PC-9 (cell line): ENCODE measurements at regions of chr5 and their contacts with region 1.

Region 1: DNA sequence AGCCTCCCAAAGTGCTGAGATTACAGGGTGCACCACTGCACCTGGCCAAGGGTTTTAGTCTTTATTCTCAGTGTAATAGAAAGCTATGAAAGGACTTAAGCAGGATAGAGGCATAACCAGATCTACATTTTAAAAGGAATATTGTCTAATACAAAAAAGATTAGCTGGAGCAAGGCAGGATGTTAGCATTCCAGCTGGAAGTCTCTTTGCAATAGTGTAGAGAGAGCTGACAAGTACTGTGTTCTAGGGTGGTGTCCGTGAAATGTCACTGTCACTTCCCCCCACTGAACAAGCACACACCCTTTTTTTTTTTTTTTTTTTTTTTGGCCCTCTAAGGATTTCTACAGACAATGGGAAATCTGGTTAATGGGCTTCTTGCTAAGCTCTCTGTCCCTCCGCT is 24.2 kb upstream of the DEPDC1B start:
- DNase-seq: no peak
- H3K4me3 ChIP-seq: no peak overlapping the region
- H3K27ac ChIP-seq: no peak overlapping the region
- H3K4me1 ChIP-seq: no peaks in the 10 kb centered on the region
- H3K27me3 ChIP-seq: no peaks in the 10 kb centered on the region
- CTCF ChIP-seq: no peak

Region 2: GRCh38 chr5:60131504-60131903 is 592.6 kb before region 1 on chr5:
- CTCF ChIA-PET with region 1: no interaction called
- POLR2A ChIA-PET with region 1: no interaction called
- intact Hi-C with region 1: no loop called
- DNase-seq: no peak
- H3K4me3 ChIP-seq: no peak overlapping the region
- H3K27ac ChIP-seq: no peak overlapping the region
- H3K4me1 ChIP-seq: no peaks in the 10 kb centered on the region
- H3K27me3 ChIP-seq: no peaks in the 10 kb centered on the region
- CTCF ChIP-seq: no peak

Region 3: GRCh38 chr5:60993425-60993824 is 269.3 kb after region 1 on chr5:
- CTCF ChIA-PET with region 1: no interaction called
- POLR2A ChIA-PET with region 1: no interaction called
- intact Hi-C with region 1: no loop called
- DNase-seq: no peak
- H3K4me3 ChIP-seq: no peak overlapping the region
- H3K27ac ChIP-seq: no peak overlapping the region
- H3K4me1 ChIP-seq: no peaks in the 10 kb centered on the region
- H3K27me3 ChIP-seq: no peaks in the 10 kb centered on the region
- CTCF ChIP-seq: no peak

Region 4: DNA sequence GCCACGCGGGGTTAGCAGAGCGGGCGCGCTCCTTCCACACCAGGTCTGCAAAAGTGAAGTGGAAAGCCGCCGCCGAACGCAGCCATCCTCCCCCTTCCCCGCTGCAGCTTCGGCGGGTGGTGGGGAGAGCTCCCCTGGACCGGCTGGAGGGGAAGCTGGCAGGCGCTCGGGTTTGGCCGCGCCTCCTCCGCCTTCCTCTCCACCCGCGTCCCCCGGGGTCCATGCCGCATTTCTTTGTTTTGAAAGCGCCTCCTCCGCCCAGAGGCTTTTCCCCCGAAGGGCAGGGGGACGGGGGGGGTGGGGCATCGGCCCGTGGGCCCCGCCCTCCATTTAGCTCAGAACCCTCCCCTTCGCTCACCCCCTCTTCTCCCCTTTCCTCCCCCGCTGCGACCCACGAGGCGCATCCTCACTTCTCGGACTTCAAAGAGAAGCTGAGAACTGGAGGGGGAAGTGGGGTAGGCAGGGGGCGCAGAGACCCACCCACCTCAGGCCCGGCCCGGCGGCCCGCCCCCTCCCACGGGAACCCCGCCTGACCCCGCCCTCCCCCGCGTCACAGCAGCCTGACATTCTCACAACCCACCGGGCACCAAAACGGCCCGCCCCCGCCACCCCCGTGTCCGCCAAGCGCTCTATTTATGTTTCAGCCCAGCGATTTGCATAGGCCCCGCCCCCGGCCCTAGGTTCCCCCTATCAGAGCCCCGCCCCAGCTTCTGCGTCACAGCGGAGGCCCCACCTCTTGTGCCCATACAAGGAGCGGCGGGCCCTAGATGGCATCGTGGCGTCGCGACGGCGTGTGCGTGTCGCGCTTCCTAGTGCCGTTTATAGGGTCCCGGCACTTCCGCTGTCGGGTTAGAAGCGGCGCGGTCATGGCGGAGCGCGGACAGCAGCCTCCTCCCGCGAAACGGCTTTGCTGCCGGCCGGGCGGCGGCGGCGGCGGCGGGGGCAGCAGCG is 607.6 kb after region 1 on chr5 and contains the start of gene ZSWIM6:
- CTCF ChIA-PET with region 1: no interaction called
- POLR2A ChIA-PET with region 1: no interaction called
- intact Hi-C with region 1: no loop called
- DNase-seq: peak; percentile 94 to 96
- H3K4me3 ChIP-seq: peak within 1 kb of the TSS; percentile 97
- H3K27ac ChIP-seq: peak within 1 kb of the TSS; percentile 64
- H3K4me1 ChIP-seq: peaks cover 47% of the 10 kb centered on the region
- H3K27me3 ChIP-seq: no peaks in the 10 kb centered on the region
- CTCF ChIP-seq: no peak
- total RNA-seq, gene ZSWIM6: 9.7 and 12.9 TPM in 2 replicates

Region 5: GRCh38 chr5:62714296-62714695 is 1990.2 kb after region 1 on chr5:
- CTCF ChIA-PET with region 1: no interaction called
- POLR2A ChIA-PET with region 1: interaction called, 13 read pairs
- intact Hi-C with region 1: no loop called
- DNase-seq: no peak
- H3K4me3 ChIP-seq: no peak overlapping the region
- H3K27ac ChIP-seq: no peak overlapping the region
- H3K4me1 ChIP-seq: no peaks in the 10 kb centered on the region
- H3K27me3 ChIP-seq: peaks cover 18% of the 10 kb centered on the region; the same call in 1 of the 2 replicates
- CTCF ChIP-seq: no peak